Ascending aorta (tissue), 2 donors: ENCODE measurements at regions of chr6 and their contacts with region 1.

Region 1: GRCh38 chr6:146857180-146857979 is 258.6 kb downstream of the ADGB start:
- DNase-seq: peak; percentile 28 to 93
- H3K4me3 ChIP-seq: peak overlapping the region; percentile 43 to 62
- H3K27ac ChIP-seq: peak overlapping the region; percentile 57 to 77
- H3K4me1 ChIP-seq: peaks cover 0 to 4% of the 10 kb centered on the region in 2 donors
- H3K27me3 ChIP-seq: no peaks in the 10 kb centered on the region
- CTCF ChIP-seq: peak in 2 of 3 experiments; percentile 95 to 98

Region 2: DNA sequence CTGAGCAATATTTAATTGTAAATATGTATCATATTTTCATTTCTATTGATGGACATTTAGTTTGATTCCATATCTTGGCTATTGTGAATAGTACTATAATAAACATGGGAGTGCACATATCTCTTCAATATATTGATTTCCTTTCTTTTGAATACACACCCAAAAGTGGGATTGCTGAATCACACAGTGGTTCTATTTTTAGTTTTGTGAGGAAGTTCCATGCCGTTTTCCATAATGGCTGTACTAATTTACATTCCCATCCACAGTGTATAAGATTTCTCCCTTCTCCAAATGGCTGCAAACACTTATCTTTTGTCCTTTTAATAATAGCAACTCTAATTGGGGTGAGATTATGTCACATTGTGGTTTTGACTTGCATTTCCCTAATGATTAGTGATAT is 400.5 kb before region 1 on chr6:
- intact Hi-C with region 1: no loop called
- DNase-seq: no peak
- H3K4me3 ChIP-seq: no peak overlapping the region
- H3K27ac ChIP-seq: no peak overlapping the region
- H3K4me1 ChIP-seq: no peaks in the 10 kb centered on the region
- H3K27me3 ChIP-seq: no peaks in the 10 kb centered on the region
- CTCF ChIP-seq: no peak

Region 3: GRCh38 chr6:146913842-146914488 is 56.6 kb after region 1 on chr6:
- intact Hi-C with region 1: loop called (anchors 2 kb)
- DNase-seq: peak; percentile 31 to 88
- H3K4me3 ChIP-seq: peak overlapping the region; percentile 43 to 44
- H3K27ac ChIP-seq: peak overlapping the region; percentile 64 to 75
- H3K4me1 ChIP-seq: peaks cover 0 to 10% of the 10 kb centered on the region in 2 donors
- H3K27me3 ChIP-seq: no peaks in the 10 kb centered on the region
- CTCF ChIP-seq: no peak

Region 4: DNA sequence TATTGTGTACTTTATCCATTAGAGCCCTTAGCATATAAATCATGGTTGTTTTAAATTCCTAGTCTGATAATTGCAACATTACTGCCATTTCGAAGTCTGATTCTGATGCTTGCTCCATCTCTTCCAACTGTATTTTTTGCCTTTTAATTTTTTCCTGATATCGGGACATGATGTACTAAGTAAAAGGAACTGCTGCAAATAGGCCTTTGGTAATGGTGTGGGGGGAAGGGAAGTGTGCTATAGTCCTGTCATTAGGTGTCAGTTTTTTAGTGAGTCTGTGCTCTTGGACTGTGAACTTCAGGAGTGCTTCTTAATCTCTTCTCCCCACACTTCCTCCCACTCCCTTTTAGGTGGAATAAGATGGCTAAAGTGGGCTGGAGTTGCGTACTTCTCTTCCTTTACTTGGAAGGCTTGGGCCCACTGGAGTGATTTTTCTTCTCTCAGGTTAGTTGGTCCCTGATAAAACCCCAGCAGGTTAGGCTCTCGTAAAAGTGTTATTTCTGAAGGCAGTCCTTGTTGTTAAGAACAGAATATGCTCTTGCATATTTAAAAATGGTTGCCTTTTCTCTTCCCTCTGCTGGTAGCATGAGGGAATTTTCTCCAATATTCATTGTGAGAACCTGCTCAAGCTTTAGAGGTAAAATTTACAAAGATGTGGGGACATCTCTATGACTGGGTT is 364.9 kb after region 1 on chr6:
- intact Hi-C with region 1: loop called (anchors 1 kb)
- DNase-seq: no peak
- H3K4me3 ChIP-seq: no peak overlapping the region
- H3K27ac ChIP-seq: no peak overlapping the region
- H3K4me1 ChIP-seq: no peaks in the 10 kb centered on the region
- H3K27me3 ChIP-seq: no peaks in the 10 kb centered on the region
- CTCF ChIP-seq: peak in 2 of 3 experiments; percentile 16 to 34

Region 5: DNA sequence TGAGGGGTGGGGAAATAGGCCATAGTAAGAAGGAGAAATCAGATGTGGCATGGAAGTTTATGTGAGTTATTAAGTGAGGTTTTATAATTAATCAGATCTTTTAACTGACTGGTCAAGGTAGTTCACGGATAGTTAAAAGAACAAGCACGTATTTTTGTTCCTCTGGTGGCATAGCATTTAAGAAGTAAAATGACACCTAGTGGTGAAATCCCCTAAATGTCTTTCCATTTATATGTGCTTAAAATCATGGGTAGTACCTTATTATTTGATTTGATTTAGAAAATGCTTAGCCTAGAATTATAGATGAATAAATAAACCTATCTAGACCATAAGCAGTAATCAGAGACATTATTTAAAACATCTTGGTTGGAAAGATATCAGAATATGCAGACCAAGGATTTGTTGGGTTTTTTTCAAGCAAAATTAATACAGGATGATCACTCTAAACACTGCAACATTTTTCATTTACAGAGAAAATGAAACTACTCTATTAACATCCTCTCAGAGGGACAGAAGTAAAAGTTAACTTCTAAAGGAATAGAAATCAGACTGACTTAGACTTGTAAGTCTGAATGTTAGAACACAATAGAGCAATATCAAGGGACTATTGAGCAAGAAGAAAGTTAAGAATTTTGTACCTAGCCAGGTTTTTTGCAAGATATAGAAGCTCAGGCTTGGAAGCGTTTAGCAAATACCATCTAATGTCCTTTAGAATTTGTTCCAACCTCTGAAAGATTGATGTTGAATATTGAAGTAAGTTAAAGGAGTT is 427.9 kb after region 1 on chr6:
- intact Hi-C with region 1: loop called (anchors 1 kb)
- DNase-seq: no peak
- H3K4me3 ChIP-seq: no peak overlapping the region
- H3K27ac ChIP-seq: no peak overlapping the region
- H3K4me1 ChIP-seq: no peaks in the 10 kb centered on the region
- H3K27me3 ChIP-seq: no peaks in the 10 kb centered on the region
- CTCF ChIP-seq: peak; percentile 20 to 54 (median 42)

Region 6: DNA sequence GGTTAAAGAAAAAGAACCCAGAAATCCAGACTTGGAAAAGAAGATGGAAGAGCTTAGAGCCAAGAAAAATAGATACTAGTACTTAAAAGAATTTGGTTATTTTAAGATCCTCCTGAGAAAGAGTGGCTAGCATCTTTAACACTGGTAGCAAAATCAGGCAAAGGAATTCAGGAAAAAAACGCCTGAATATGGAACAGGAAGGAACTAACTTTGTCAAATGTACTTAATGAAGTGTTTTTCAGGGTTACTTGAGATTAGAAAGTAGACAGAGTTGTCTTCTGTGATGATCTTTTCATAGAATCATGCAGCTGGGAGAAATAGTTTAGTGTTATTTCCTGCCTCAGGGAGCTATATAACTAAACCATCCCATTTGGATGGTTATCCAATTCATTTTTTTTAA is 1434.5 kb after region 1 on chr6:
- intact Hi-C with region 1: no loop called
- DNase-seq: no peak
- H3K4me3 ChIP-seq: no peak overlapping the region
- H3K27ac ChIP-seq: no peak overlapping the region
- H3K4me1 ChIP-seq: peaks cover 0 to 14% of the 10 kb centered on the region in 2 donors
- H3K27me3 ChIP-seq: no peaks in the 10 kb centered on the region
- CTCF ChIP-seq: no peak